ENCODE measurements at regions of chr16 and their contacts with region 1.

Region 1: DNA sequence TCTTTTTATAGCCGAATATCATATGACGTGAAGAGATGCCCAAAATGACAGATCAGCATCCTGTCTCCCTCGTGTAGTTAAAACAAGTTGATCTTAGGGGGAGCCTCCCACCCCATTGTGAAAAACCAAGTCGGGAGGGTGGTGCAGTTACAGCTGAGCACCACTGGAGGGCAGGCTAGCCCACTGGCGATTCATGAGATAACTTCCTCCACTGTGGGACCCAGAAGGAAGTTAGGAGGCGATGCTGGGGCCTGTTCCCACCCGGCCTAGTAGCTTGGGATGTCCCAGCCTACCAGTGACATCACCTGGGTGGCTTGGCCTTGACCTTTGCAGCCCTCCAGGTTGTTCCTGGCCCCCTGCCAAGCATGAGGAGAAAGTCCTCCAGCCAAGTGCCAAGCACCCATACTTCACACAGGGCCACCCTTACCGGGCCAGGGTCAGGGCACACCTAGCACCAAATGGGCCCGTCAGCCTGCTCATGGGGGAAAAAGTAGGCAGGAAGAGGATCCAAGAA is 8.1 kb upstream of the CPNE2 start:
- DNase-seq: peak; percentile 32
- H3K4me3 ChIP-seq: no peak overlapping the region
- H3K27ac ChIP-seq: no peak overlapping the region
- H3K27me3 ChIP-seq: no peaks in the 10 kb centered on the region
- CTCF ChIP-seq: peak; percentile 99

Region 2: GRCh38 chr16:57071831-57072582 is 12.3 kb before region 1 on chr16:
- CTCF ChIA-PET with region 1: interaction called, 24 read pairs
- POLR2A ChIA-PET with region 1: no interaction called
- DNase-seq: no peak
- H3K4me3 ChIP-seq: no peak overlapping the region
- H3K27ac ChIP-seq: no peak overlapping the region
- H3K27me3 ChIP-seq: no peaks in the 10 kb centered on the region
- CTCF ChIP-seq: no peak

Region 3: DNA sequence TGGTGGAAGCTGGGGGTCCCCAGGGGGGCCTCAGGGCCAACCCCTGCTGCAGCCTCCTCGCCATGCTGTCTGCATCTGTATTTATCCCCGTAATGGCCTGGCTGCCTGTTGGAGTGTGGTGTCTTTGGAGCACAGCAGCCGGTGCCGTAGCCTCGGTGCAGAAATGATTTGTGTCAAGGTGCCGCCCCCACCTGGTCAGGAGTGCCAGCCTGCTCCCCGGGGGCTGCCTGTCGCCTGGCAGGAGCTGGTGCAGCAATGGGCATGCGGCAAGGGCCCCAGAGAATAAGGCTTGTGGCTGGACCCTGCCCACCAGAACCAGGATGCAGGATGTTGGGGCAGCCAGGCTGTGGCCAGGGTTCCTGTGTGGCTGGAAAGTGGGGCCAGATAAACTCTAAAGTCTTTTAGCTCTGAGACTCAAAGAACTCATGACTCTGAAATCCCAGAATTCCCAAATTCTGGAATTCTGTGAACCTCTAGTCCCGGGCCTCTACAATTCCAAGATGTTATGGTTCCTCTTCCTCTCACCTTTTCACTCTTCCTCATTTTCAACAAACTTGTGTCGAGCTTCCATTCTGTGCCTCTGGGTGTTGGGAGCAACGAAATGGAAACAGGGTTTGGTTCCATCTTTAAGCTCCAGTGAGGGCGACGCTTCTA is 14.0 kb after region 1 on chr16:
- CTCF ChIA-PET with region 1: interaction called, 29 read pairs
- POLR2A ChIA-PET with region 1: no interaction called
- DNase-seq: no peak
- H3K4me3 ChIP-seq: no peak overlapping the region
- H3K27ac ChIP-seq: no peak overlapping the region
- H3K27me3 ChIP-seq: no peaks in the 10 kb centered on the region
- CTCF ChIP-seq: no peak

Region 4: GRCh38 chr16:57167953-57168352 is 83.6 kb after region 1 on chr16:
- CTCF ChIA-PET with region 1: interaction called, 26 read pairs
- POLR2A ChIA-PET with region 1: no interaction called
- DNase-seq: peak; percentile 29
- H3K4me3 ChIP-seq: no peak overlapping the region
- H3K27ac ChIP-seq: no peak overlapping the region
- H3K27me3 ChIP-seq: no peaks in the 10 kb centered on the region
- CTCF ChIP-seq: peak; percentile 83

Region 5: GRCh38 chr16:57300387-57301125 is 216.2 kb after region 1 on chr16:
- CTCF ChIA-PET with region 1: interaction called, 13 read pairs
- POLR2A ChIA-PET with region 1: no interaction called
- DNase-seq: peak; percentile 99
- H3K4me3 ChIP-seq: peak overlapping the region; percentile 65
- H3K27ac ChIP-seq: peak overlapping the region; percentile 68
- H3K27me3 ChIP-seq: peaks cover 21% of the 10 kb centered on the region
- CTCF ChIP-seq: peak; percentile 98